Activated CD4-positive, alpha-beta T cell treated with anti-CD3 and anti-CD28 coated beads, Interleukin-2, amount 10 ng/mL, durations not matched to agents 24 days and 14 days (primary cell): ENCODE measurements at regions of chr7 and their contacts with region 1.

Region 1: DNA sequence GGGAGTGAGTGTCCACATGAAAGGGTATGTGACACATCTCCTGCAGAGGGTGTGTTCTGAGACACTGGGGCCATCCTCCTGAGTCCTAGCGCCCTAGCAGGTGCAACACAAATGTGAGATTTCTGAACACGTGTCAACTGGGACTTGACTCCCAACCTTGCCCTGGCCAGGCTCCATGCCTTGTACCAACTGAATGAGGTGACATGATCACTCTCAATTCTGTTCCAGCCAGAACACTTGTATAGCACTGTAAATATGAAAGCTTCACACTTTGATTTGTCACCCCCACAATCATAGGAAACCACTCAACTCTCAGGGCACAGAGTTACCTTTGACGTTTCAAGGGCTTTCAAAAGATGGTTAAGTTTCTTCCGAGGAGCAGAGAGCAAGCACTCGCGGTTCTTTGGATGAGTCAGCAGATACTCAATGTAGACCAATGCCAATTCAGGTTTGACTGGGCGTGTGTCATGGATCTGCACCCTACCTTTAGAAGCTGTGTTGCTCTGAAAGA is 48.6 kb downstream of the NCAPG2 start:
- DNase-seq: peak; percentile 88
- H3K4me3 Mint-ChIP-seq: peak overlapping the region; percentile 71
- H3K27ac Mint-ChIP-seq: peak overlapping the region; percentile 92
- H3K4me1 Mint-ChIP-seq: peaks cover 24% of the 10 kb centered on the region
- H3K27me3 Mint-ChIP-seq: no peaks in the 10 kb centered on the region

Region 2: DNA sequence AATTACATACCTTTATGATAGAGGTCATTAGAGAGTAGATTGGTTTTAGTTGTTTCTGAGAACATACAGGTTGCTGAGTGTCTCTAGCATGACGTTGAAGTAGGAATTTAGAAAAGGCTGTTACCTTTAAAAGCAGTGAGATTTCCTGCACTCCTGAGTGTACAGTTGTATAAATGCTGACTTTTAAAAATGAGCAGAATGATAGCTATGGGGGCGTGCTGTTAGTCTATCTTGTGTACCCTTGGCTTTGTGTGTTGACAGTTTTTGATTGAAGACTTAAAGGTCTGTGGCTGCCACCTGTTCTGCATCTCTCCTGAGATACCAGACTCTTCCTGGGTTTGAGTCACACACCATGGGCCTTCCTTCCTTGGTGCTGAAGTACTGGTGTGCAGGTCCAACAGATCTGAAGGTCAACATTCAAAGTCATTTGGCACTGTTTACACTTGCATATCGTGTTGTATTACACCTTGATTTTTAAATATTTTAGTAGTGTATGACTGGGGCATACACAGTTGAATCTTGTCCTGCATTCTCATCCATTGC is 1295.4 kb before region 1 on chr7:
- intact Hi-C with region 1: loop called (anchors 10 kb)
- DNase-seq: no peak
- H3K4me3 Mint-ChIP-seq: no peak overlapping the region
- H3K27ac Mint-ChIP-seq: no peak overlapping the region
- H3K4me1 Mint-ChIP-seq: peaks cover 25% of the 10 kb centered on the region
- H3K27me3 Mint-ChIP-seq: no peaks in the 10 kb centered on the region

Region 3: DNA sequence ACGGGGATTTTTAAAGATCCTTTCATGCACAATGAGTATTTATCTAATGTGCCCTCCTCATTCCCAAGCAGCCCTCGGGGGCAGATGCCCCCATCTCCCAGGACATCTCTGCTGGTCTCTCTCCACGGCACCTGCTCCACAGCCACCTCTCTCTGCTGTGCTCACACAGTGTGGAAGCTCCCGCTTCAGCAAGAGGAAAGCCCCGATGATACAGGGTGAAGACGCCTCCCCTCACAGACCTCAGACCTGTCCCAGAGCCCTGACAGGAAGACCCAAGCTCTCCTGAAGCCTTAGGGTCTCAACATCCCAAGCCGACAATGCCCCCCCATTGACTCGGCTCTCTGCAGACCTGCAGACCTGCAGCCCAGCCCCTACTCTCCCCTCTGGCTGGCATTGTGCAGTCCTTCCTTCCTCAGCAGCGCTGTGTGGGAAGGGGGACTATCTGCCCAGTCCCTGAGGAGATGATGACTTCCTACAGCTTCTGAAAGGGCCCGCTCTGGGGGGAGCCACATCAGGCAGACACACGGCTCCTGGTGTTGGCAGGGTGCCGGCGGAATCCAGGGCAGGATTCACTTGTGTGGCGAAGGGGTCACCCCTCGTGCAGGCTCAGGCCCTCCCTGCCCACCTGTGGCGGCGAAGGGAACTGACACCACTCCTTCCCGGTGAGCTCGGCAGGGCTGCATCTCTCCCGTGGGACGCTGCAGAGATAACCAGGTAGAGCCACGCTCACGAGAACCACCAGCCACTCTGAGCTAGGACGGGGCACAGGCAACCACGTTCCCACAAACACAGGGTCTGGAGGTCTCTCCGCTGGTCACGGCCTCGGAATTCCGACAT is 130.1 kb before region 1 on chr7:
- intact Hi-C with region 1: no loop called
- DNase-seq: no peak
- H3K4me3 Mint-ChIP-seq: no peak overlapping the region
- H3K27ac Mint-ChIP-seq: no peak overlapping the region
- H3K4me1 Mint-ChIP-seq: no peaks in the 10 kb centered on the region
- H3K27me3 Mint-ChIP-seq: no peaks in the 10 kb centered on the region

Region 4: GRCh38 chr7:158818325-158819213 is 162.6 kb after region 1 on chr7:
- intact Hi-C with region 1: loop called (anchors 2 kb)
- DNase-seq: peak; percentile 95
- H3K4me3 Mint-ChIP-seq: peak overlapping the region; percentile 89
- H3K27ac Mint-ChIP-seq: peak overlapping the region; percentile 96
- H3K4me1 Mint-ChIP-seq: peaks cover 81% of the 10 kb centered on the region
- H3K27me3 Mint-ChIP-seq: no peaks in the 10 kb centered on the region

Region 5: GRCh38 chr7:159197066-159197975 is 541.3 kb after region 1 on chr7:
- intact Hi-C with region 1: loop called (anchors 5 kb)
- DNase-seq: peak; percentile 85
- H3K4me3 Mint-ChIP-seq: peak overlapping the region; percentile 79
- H3K27ac Mint-ChIP-seq: peak overlapping the region; percentile 97
- H3K4me1 Mint-ChIP-seq: peaks cover 23% of the 10 kb centered on the region
- H3K27me3 Mint-ChIP-seq: no peaks in the 10 kb centered on the region

Region 6: GRCh38 chr7:159237048-159237653 is 581.2 kb after region 1 on chr7:
- intact Hi-C with region 1: no loop called
- DNase-seq: no peak
- H3K4me3 Mint-ChIP-seq: no peak overlapping the region
- H3K27ac Mint-ChIP-seq: no peak overlapping the region
- H3K4me1 Mint-ChIP-seq: no peaks in the 10 kb centered on the region
- H3K27me3 Mint-ChIP-seq: peaks cover 20% of the 10 kb centered on the region